CD4-positive, alpha-beta memory T cell (primary cell): ENCODE measurements at regions of chr2 and their contacts with region 1.

Region 1: GRCh38 chr2:44361330-44362206 is at the starts of genes CAMKMT and PREPL:
- DNase-seq: peak; percentile 98 to 99 (median 99)
- H3K4me3 ChIP-seq: peak within 1 kb of the TSS; percentile 93 to 96
- H3K4me3 Mint-ChIP-seq: peak within 1 kb of the TSS; percentile 97 to 99 (median 98)
- H3K27ac ChIP-seq: peak within 1 kb of the TSS; percentile 98
- H3K27ac Mint-ChIP-seq: peak within 1 kb of the TSS; percentile 98 to 100 (median 100)
- H3K4me1 ChIP-seq: peaks cover 51% of the 10 kb centered on the region
- H3K4me1 Mint-ChIP-seq: peaks cover 28 to 70% (median 45%) of the 10 kb centered on the region in 4 donors
- H3K27me3 ChIP-seq: no peaks in the 10 kb centered on the region
- H3K27me3 Mint-ChIP-seq: no peaks in the 10 kb centered on the region
- total RNA-seq, gene CAMKMT: 15.3 to 16.2 TPM
- total RNA-seq, gene PREPL: 39.5 to 42.8 TPM

Region 2: DNA sequence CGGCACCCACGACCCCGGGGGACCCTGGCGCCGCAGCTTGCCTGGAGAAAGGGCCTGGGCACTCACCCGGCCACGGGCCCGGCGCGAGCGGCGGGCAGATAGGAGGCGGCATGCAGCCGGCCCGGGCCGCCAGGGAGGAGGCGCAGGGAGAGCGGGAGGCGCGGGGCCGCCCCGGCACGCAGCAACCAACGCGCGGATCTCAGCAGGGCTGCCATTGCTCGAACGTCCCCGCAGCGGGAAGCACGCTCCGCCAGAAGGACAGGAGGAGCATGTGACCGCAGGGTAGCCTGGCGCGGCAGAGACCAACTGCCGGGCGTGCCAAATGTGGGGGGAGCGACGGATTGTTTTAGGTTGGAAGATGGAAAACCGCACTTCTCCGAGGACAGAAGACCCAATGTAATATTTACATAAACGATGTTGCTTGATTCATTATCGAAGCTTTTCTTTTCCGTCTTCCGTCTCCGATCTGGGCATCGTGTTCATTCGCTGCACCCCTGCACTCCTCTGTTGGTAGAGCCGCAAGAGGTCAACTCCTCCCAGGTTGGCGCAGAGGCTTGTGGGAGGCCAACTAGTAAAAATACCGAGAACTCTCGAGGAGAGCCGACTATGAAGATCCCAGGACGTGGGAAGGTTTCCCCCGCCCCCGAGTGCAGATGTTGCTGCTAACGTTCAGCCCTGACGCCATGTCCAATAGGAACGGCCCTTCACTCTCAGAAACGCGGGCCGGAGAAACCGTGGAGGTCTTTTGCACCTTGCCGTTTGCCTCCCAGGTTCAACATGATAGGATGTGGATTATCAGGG is 365.6 kb before region 1 on chr2 and contains the start of gene LRPPRC:
- CTCF ChIA-PET with region 1: no interaction called
- POLR2A ChIA-PET with region 1: interaction called, 17 read pairs
- intact Hi-C with region 1: loop called (anchors 1 kb)
- DNase-seq: peak; percentile 90 to 94 (median 94)
- H3K4me3 ChIP-seq: peak within 1 kb of the TSS; percentile 84 to 94
- H3K4me3 Mint-ChIP-seq: peak within 1 kb of the TSS; percentile 87 to 97 (median 94)
- H3K27ac ChIP-seq: peak within 1 kb of the TSS; percentile 79
- H3K27ac Mint-ChIP-seq: peak within 1 kb of the TSS; percentile 93 to 100 (median 97)
- H3K4me1 ChIP-seq: peaks cover 40% of the 10 kb centered on the region
- H3K4me1 Mint-ChIP-seq: peaks cover 33 to 58% (median 49%) of the 10 kb centered on the region in 4 donors
- H3K27me3 ChIP-seq: no peaks in the 10 kb centered on the region
- H3K27me3 Mint-ChIP-seq: peaks cover 0 to 2% of the 10 kb centered on the region in 2 donors
- total RNA-seq, gene LRPPRC: 61.5 to 65.3 TPM

Region 3: GRCh38 chr2:44167940-44168680 is 193.5 kb before region 1 on chr2:
- CTCF ChIA-PET with region 1: interaction called, 5 read pairs
- POLR2A ChIA-PET with region 1: interaction called, 57 read pairs
- intact Hi-C with region 1: loop called (anchors 1 kb)
- DNase-seq: peak; percentile 96 to 100 (median 99)
- H3K4me3 ChIP-seq: peak overlapping the region; percentile 81 to 99
- H3K4me3 Mint-ChIP-seq: peak overlapping the region; percentile 96 to 100 (median 100)
- H3K27ac ChIP-seq: peak overlapping the region; percentile 98
- H3K27ac Mint-ChIP-seq: peak overlapping the region; percentile 97 to 100 (median 100)
- H3K4me1 ChIP-seq: peaks cover 37% of the 10 kb centered on the region
- H3K4me1 Mint-ChIP-seq: peaks cover 19 to 44% (median 35%) of the 10 kb centered on the region in 4 donors
- H3K27me3 ChIP-seq: no peaks in the 10 kb centered on the region
- H3K27me3 Mint-ChIP-seq: no peaks in the 10 kb centered on the region

Region 4: GRCh38 chr2:44244129-44244871 is 117.3 kb before region 1 on chr2:
- CTCF ChIA-PET with region 1: interaction called, 8 read pairs
- POLR2A ChIA-PET with region 1: interaction called, 10 read pairs
- intact Hi-C with region 1: loop called (anchors 1 kb)
- DNase-seq: peak; percentile 46 to 68 (median 66)
- H3K4me3 ChIP-seq: peak overlapping the region in 1 of 2 donors; percentile 58
- H3K4me3 Mint-ChIP-seq: peak overlapping the region; percentile 83 to 93 (median 86)
- H3K27ac ChIP-seq: no peak overlapping the region
- H3K27ac Mint-ChIP-seq: peak overlapping the region in 5 of 7 donors; percentile 58 to 88 (median 71)
- H3K4me1 ChIP-seq: peaks cover 10% of the 10 kb centered on the region
- H3K4me1 Mint-ChIP-seq: peaks cover 13 to 30% (median 23%) of the 10 kb centered on the region in 4 donors
- H3K27me3 ChIP-seq: no peaks in the 10 kb centered on the region
- H3K27me3 Mint-ChIP-seq: no peaks in the 10 kb centered on the region

Region 5: DNA sequence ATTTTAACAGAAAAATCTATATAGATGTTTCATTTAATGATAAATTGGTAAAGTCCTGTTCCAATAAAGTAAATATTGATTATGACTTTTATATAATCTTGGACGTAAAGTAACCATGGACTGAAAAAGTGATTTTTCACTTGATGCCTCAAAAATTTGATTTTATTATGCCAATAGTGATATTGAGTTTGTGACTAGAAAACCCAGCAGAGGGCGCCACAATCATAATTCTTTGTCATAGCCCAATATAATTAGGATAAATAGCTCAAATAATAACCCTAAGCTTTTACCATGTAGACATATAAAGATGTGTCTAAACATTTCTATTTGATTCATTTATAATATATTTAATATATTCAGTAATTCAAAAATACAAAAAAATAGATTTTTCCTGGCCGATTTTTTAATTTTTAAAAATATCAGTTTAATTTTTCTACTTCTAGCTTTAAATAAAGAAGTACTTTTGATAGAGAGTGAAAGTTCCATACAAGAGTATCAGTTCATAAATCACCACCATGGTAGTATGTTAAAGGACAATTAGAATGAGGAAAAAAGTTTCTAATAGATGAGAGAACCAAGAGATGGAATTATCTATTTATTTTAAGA is 30.9 kb after region 1 on chr2:
- CTCF ChIA-PET with region 1: interaction called, 22 read pairs
- POLR2A ChIA-PET with region 1: interaction called, 3 read pairs
- intact Hi-C with region 1: no loop called
- DNase-seq: peak; percentile 3 to 30 (median 21)
- H3K4me3 ChIP-seq: no peak overlapping the region
- H3K4me3 Mint-ChIP-seq: no peak overlapping the region
- H3K27ac ChIP-seq: no peak overlapping the region
- H3K27ac Mint-ChIP-seq: no peak overlapping the region
- H3K4me1 ChIP-seq: no peaks in the 10 kb centered on the region
- H3K4me1 Mint-ChIP-seq: peaks cover 4 to 10% (median 6%) of the 10 kb centered on the region in 4 donors
- H3K27me3 ChIP-seq: no peaks in the 10 kb centered on the region
- H3K27me3 Mint-ChIP-seq: no peaks in the 10 kb centered on the region

Region 6: GRCh38 chr2:44537264-44537663 is 175.7 kb after region 1 on chr2:
- CTCF ChIA-PET with region 1: no interaction called
- POLR2A ChIA-PET with region 1: no interaction called
- intact Hi-C with region 1: no loop called
- DNase-seq: no peak
- H3K4me3 ChIP-seq: no peak overlapping the region
- H3K4me3 Mint-ChIP-seq: no peak overlapping the region
- H3K27ac ChIP-seq: no peak overlapping the region
- H3K27ac Mint-ChIP-seq: no peak overlapping the region
- H3K4me1 ChIP-seq: no peaks in the 10 kb centered on the region
- H3K4me1 Mint-ChIP-seq: peaks cover 0 to 4% (median 0%) of the 10 kb centered on the region in 4 donors
- H3K27me3 ChIP-seq: no peaks in the 10 kb centered on the region
- H3K27me3 Mint-ChIP-seq: no peaks in the 10 kb centered on the region